Head of caudate nucleus (tissue), 42 donors: ENCODE measurements at regions of chr1 and their contacts with region 1.

Region 1: GRCh38 chr1:161225534-161226319 is at the start of gene TOMM40L:
- DNase-seq: peak; percentile 82 to 98 (median 93)

Region 2: GRCh38 chr1:161201828-161202725 is 23.6 kb before region 1 on chr1 and contains the start of gene NDUFS2:
- intact Hi-C with region 1: loop called (anchors 2 kb)
- DNase-seq: peak; percentile 95 to 100 (median 99)

Region 3: DNA sequence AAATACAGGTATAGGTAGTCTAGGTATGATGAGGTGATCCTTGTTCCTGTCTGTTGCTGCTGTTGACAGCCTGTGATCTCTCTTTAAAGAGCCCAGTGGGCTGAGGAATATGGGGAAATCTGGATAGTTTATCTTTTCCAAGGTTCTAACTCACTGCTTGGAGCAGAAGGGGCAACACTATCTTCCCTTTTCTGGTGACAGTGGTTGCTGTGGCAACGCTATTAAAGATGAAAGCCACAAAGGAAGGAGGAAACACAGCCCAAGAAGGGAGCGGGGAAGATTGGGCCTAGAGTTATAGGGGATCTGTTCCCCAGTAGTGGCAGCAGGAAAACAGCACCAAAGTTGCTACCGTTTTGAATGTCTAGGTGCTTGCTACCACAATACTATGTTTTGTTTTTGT is 41.6 kb after region 1 on chr1:
- intact Hi-C with region 1: no loop called
- DNase-seq: peak in 2 of 42 donors; percentile 9 to 39

Region 4: GRCh38 chr1:161292631-161293030 is 66.9 kb after region 1 on chr1:
- intact Hi-C with region 1: loop called (anchors 5 kb)
- DNase-seq: no peak

Region 5: GRCh38 chr1:161314201-161314981 is 88.7 kb after region 1 on chr1 and contains the start of gene SDHC:
- intact Hi-C with region 1: loop called (anchors 5 kb)
- DNase-seq: peak; percentile 90 to 98 (median 96)

Region 6: GRCh38 chr1:161389691-161390558 is 164.2 kb after region 1 on chr1:
- intact Hi-C with region 1: loop called (anchors 5 kb)
- DNase-seq: peak; percentile 93 to 100 (median 98)